T-cell (primary cell): ENCODE measurements at regions of chr1 and their contacts with region 1.

Region 1: GRCh38 chr1:110963691-110964399 is at the start of gene LRIF1:
- DNase-seq: peak; percentile 95 to 100 (median 100)
- ATAC-seq: peak; percentile 92 to 99 (median 97)
- H3K4me3 ChIP-seq: peak within 1 kb of the TSS; percentile 85 to 92
- H3K4me3 Mint-ChIP-seq: peak within 1 kb of the TSS; percentile 83 to 94 (median 88)
- H3K27ac ChIP-seq: peak within 1 kb of the TSS; percentile 99
- H3K27ac Mint-ChIP-seq: peak within 1 kb of the TSS; percentile 96 to 99
- H3K4me1 ChIP-seq: peaks cover 0 to 12% of the 10 kb centered on the region in 2 experiments
- H3K4me1 Mint-ChIP-seq: peaks cover 38 to 43% (median 40%) of the 10 kb centered on the region in 3 donors
- H3K27me3 ChIP-seq: peaks cover 3 to 8% of the 10 kb centered on the region in 2 experiments
- H3K27me3 Mint-ChIP-seq: peaks cover 11 to 14% of the 10 kb centered on the region in 2 donors
- total RNA-seq, gene LRIF1: 6.4 to 23.8 (median 19.9) TPM

Region 2: DNA sequence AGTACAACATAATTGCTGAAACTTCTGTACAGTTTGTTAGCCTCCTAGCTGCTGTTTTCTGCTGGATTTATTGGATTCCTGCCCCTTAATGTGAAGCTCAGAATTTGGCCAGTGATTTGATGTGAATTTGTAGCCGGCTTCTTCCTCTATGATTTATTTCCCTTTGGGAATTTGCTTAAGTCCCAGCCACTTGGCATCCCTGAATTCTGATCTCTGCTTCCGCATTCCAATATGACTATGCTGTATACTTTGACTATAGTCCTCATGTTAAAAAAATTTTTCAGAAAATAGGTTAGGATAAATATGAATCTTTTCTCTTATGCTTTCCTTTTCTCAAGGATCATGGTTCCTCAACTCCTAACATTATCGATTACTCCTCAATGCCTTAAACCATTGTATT is 12.2 kb after region 1 on chr1:
- CTCF ChIA-PET with region 1: interaction called in 1 of 2 experiments, 3 read pairs
- POLR2A ChIA-PET with region 1: interaction called in 1 of 2 experiments, 10 read pairs
- DNase-seq: no peak
- ATAC-seq: no peak
- H3K4me3 ChIP-seq: no peak overlapping the region
- H3K4me3 Mint-ChIP-seq: no peak overlapping the region
- H3K27ac ChIP-seq: no peak overlapping the region
- H3K27ac Mint-ChIP-seq: no peak overlapping the region
- H3K4me1 ChIP-seq: no peaks in the 10 kb centered on the region
- H3K4me1 Mint-ChIP-seq: no peaks in the 10 kb centered on the region
- H3K27me3 ChIP-seq: peaks cover 3 to 14% of the 10 kb centered on the region in 2 experiments
- H3K27me3 Mint-ChIP-seq: peaks cover 47 to 60% of the 10 kb centered on the region in 2 donors